Sciatic nerve (tissue), 2 donors: ENCODE measurements at regions of chr17 and their contacts with region 1.

Region 1: DNA sequence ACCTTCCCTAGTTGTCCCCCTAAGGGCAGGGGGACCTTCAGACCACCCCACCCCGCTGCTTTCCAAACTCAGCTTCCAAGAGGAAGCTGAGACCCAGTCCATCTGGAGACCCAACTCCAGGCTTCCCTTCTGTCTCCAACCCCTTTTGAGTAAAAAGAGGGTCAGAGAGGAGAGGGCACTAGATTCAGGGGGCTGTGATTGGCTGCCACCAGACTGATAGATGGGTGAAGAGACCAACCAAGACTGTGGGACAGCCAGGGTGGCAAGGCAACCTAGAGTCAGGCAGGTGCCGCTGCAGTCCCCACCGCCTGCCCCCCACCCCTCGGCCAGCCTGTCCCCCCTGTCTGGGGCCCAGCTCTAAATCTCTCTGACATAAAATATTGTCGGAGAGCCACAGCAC is 92.5 kb downstream of the SDK2 start:
- DNase-seq: no peak
- ATAC-seq: no peak

Region 2: DNA sequence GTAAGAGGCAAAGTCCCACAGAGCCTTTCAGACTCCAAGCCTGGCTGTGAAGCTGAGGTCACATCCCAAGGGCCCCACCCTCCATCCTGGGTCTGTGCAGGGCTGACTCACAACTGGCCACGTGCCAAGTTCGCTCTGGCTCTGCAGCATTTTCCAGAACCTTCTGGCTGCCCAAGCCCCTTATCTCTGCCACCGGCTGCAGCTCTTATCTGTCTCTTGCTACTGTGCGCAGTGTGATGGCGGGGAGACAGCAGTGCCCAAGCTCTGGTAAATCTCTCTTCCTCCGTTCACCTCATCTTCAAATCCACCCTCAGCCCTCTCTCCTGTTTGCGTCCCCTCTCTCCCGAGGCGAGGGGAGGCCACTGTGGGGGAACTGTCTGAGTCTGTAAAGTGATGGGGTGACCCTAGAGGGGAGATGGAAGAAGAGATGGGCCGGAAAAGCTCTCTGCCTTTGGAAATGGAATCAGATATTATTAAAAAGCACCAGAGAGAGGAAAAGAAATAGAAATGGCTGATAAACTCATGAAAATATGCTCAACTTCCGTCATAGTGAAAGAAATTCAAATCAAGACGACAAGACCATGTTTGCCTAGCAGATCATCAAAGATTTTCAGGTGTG is 77.3 kb before region 1 on chr17:
- intact Hi-C with region 1: no loop called
- DNase-seq: peak; percentile 80
- ATAC-seq: peak; percentile 45

Region 3: GRCh38 chr17:73492821-73493814 is 58.6 kb before region 1 on chr17:
- intact Hi-C with region 1: loop called (anchors 10 kb)
- DNase-seq: no peak
- ATAC-seq: no peak

Region 4: GRCh38 chr17:73522696-73523095 is 29.1 kb before region 1 on chr17:
- intact Hi-C with region 1: loop called (anchors 2 kb)
- DNase-seq: no peak
- ATAC-seq: no peak